CD14-positive monocyte (primary cell): ENCODE measurements at regions of chr13 and their contacts with region 1.

Region 1: DNA sequence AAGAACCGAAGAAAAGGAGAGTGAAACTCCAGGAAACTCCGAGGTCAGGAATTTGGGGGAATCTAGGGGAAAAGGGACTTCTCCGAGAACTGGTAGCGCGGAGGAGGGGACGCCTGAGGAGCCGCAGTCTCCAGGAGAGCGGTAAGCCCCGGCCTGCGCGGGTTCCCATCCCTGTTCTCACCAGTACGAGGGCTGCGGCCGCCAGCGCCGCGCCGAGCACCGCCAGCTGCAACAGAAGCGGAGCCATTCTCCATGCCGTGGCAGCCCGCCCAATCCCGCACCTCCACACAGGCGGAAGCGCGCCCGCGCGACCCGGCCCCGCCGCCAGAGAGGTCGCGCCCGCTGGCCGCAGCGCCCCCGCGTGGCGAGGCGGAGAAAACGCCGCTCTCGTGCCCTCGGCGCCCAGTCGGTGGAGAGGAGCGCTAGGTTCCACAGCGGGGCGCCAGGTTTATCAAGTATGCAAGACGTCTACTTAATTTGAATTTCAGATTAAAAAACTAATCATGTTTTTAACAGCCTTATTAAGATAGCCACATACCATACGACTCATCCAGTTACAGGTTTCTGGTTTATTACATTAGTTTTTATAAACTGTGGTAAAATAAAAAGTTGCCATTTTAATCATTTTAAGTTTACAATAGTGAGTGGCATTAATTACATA is at the start of gene ALG5:
- DNase-seq: peak; percentile 87 to 91 (median 87)
- H3K4me3 ChIP-seq: peak within 1 kb of the TSS; percentile 92 to 96 (median 93)
- H3K4me3 Mint-ChIP-seq: peak within 1 kb of the TSS; percentile 100
- H3K27ac ChIP-seq: peak within 1 kb of the TSS; percentile 96 to 99
- H3K27ac Mint-ChIP-seq: peak within 1 kb of the TSS; percentile 99 to 100 (median 100)
- H3K4me1 ChIP-seq: peaks cover 17 to 25% of the 10 kb centered on the region in 2 donors
- H3K4me1 Mint-ChIP-seq: peaks cover 24% of the 10 kb centered on the region
- H3K27me3 ChIP-seq: no peaks in the 10 kb centered on the region
- H3K27me3 Mint-ChIP-seq: no peaks in the 10 kb centered on the region
- CTCF ChIP-seq: peak; percentile 98
- polyA plus RNA-seq, gene ALG5: 19.3 to 77.5 (median 73.3) TPM

Region 2: GRCh38 chr13:36724141-36724540 is 275.0 kb before region 1 on chr13:
- intact Hi-C with region 1: no loop called
- DNase-seq: no peak
- H3K4me3 ChIP-seq: no peak overlapping the region
- H3K4me3 Mint-ChIP-seq: no peak overlapping the region
- H3K27ac ChIP-seq: no peak overlapping the region
- H3K27ac Mint-ChIP-seq: no peak overlapping the region
- H3K4me1 ChIP-seq: no peaks in the 10 kb centered on the region
- H3K4me1 Mint-ChIP-seq: no peaks in the 10 kb centered on the region
- H3K27me3 ChIP-seq: no peaks in the 10 kb centered on the region
- H3K27me3 Mint-ChIP-seq: no peaks in the 10 kb centered on the region
- CTCF ChIP-seq: no peak

Region 3: GRCh38 chr13:36766314-36766713 is 232.9 kb before region 1 on chr13:
- intact Hi-C with region 1: no loop called
- DNase-seq: no peak
- H3K4me3 ChIP-seq: no peak overlapping the region
- H3K4me3 Mint-ChIP-seq: no peak overlapping the region
- H3K27ac ChIP-seq: no peak overlapping the region
- H3K27ac Mint-ChIP-seq: no peak overlapping the region
- H3K4me1 ChIP-seq: no peaks in the 10 kb centered on the region
- H3K4me1 Mint-ChIP-seq: peaks cover 4% of the 10 kb centered on the region
- H3K27me3 ChIP-seq: no peaks in the 10 kb centered on the region
- H3K27me3 Mint-ChIP-seq: peaks cover 2 to 5% (median 4%) of the 10 kb centered on the region in 3 donors
- CTCF ChIP-seq: no peak

Region 4: GRCh38 chr13:36887758-36888521 is 111.2 kb before region 1 on chr13:
- intact Hi-C with region 1: no loop called
- DNase-seq: no peak
- H3K4me3 ChIP-seq: no peak overlapping the region
- H3K4me3 Mint-ChIP-seq: no peak overlapping the region
- H3K27ac ChIP-seq: no peak overlapping the region
- H3K27ac Mint-ChIP-seq: no peak overlapping the region
- H3K4me1 ChIP-seq: no peaks in the 10 kb centered on the region
- H3K4me1 Mint-ChIP-seq: no peaks in the 10 kb centered on the region
- H3K27me3 ChIP-seq: no peaks in the 10 kb centered on the region
- H3K27me3 Mint-ChIP-seq: peaks cover 0 to 5% (median 2%) of the 10 kb centered on the region in 3 donors
- CTCF ChIP-seq: no peak

Region 5: DNA sequence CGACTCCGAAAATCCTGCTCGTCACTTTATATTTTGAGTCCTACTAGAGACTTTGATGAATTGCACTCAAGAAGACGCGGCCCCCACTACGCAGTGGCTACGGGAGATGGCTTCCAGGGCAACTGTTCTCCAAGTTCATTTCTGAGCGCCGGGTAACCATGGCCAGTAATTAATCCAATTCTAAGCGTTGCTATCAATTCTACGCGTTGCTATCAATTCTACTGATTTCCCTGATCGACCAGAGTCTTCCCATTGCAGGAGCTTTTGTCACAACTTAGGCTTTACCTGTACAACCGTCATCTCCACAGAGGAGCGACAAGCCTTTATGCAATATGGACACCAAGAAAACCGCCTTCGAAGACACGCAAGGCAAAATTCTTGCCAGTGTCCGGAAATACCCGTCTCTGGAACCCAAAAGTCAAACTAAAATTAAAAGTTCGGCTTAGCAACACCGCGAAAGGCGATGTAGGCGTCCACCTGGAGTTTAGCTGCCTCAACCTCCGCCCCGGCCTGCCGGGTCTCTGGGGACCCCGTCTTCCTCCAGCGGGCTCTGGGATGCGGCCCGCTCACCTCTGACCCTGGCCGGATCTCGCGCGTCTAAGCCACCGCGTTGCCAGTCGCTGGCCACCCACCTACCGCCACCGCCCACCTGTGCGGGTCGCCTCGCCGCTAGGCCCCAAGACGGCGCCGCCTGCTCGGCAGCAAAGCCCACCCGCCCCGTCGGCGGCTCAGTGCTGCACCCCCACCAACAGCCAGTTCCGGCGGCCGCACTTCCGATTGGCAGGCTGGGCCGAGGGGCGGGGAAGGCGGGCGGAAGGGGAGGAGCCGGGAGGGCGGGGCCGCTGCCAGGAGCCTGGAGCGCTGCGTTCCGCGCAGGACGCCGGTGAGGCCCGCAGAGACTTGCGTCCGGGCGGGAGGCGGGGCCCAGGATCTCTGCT is 60.0 kb after region 1 on chr13 and contains the start of gene SUPT20H:
- intact Hi-C with region 1: loop called in 1 of 2 experiments (anchors 10 kb)
- DNase-seq: peak; percentile 82 to 86 (median 82)
- H3K4me3 ChIP-seq: peak within 1 kb of the TSS; percentile 85 to 95 (median 94)
- H3K4me3 Mint-ChIP-seq: peak within 1 kb of the TSS; percentile 92 to 98
- H3K27ac ChIP-seq: peak within 1 kb of the TSS; percentile 61 to 96
- H3K27ac Mint-ChIP-seq: peak within 1 kb of the TSS; percentile 84 to 98 (median 95)
- H3K4me1 ChIP-seq: peaks cover 10 to 20% of the 10 kb centered on the region in 2 donors
- H3K4me1 Mint-ChIP-seq: peaks cover 22% of the 10 kb centered on the region
- H3K27me3 ChIP-seq: no peaks in the 10 kb centered on the region
- H3K27me3 Mint-ChIP-seq: no peaks in the 10 kb centered on the region
- CTCF ChIP-seq: no peak
- polyA plus RNA-seq, gene SUPT20H: 24.7 to 39.8 (median 35.5) TPM

Region 6: GRCh38 chr13:38349390-38350113 is 1350.4 kb after region 1 on chr13 and contains the start of gene UFM1:
- intact Hi-C with region 1: loop called in 1 of 2 experiments (anchors 10 kb)
- DNase-seq: peak; percentile 89 to 92 (median 89)
- H3K4me3 ChIP-seq: peak within 1 kb of the TSS; percentile 70 to 93 (median 93)
- H3K4me3 Mint-ChIP-seq: peak within 1 kb of the TSS; percentile 94 to 99
- H3K27ac ChIP-seq: peak within 1 kb of the TSS; percentile 75 to 96
- H3K27ac Mint-ChIP-seq: peak within 1 kb of the TSS; percentile 96 to 98 (median 97)
- H3K4me1 ChIP-seq: peaks cover 22 to 27% of the 10 kb centered on the region in 2 donors
- H3K4me1 Mint-ChIP-seq: peaks cover 27% of the 10 kb centered on the region
- H3K27me3 ChIP-seq: no peaks in the 10 kb centered on the region
- H3K27me3 Mint-ChIP-seq: no peaks in the 10 kb centered on the region
- CTCF ChIP-seq: no peak
- polyA plus RNA-seq, gene UFM1: 36.0 to 56.6 (median 41.8) TPM